HepG2 (cell line): ENCODE measurements at regions of chr14 and their contacts with region 1.

Region 1: GRCh38 chr14:32469388-32470160 is 140.5 kb downstream of the AKAP6 start:
- DNase-seq: peak; percentile 63
- ATAC-seq: peak; percentile 60
- H3K4me3 ChIP-seq: no peak overlapping the region
- H3K27ac ChIP-seq: no peak overlapping the region
- H3K4me1 ChIP-seq: peaks cover 16% of the 10 kb centered on the region
- H3K27me3 ChIP-seq: no peaks in the 10 kb centered on the region
- CTCF ChIP-seq: peak; percentile 67
- EP300 ChIP-seq: no peak
- POLR2A ChIP-seq: no peak
- RAD21 ChIP-seq: no peak

Region 2: DNA sequence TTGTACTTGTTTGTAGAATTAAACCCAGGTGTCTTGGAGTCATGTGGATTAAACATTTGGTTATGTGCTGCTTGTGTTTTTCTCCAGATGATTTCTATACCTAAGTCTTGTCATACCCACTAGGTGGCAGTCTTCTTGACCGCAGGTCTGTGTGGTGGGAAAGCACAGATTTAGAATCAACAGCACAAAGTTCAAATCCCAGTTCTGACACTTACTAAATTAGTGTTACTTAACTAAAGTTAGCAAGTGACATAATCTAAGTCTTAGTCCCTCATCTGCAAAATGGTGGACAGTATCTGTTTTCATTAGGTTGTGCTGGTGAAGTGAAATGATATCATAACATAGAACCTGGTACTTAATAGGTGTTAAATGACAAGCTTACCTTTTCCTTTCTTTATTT is 543.5 kb before region 1 on chr14:
- CTCF ChIA-PET with region 1: interaction called, 11 read pairs
- POLR2A ChIA-PET with region 1: no interaction called
- in situ Hi-C with region 1: loop called (anchors 10 kb)
- intact Hi-C with region 1: loop called (anchors 1 kb)
- DNase-seq: peak; percentile 87
- ATAC-seq: peak; percentile 80
- H3K4me3 ChIP-seq: no peak overlapping the region
- H3K27ac ChIP-seq: no peak overlapping the region
- H3K4me1 ChIP-seq: peaks cover 14% of the 10 kb centered on the region; the same call in 1 of the 2 replicates
- H3K27me3 ChIP-seq: no peaks in the 10 kb centered on the region; a peak in 1 of 5 replicates
- CTCF ChIP-seq: peak; percentile 86
- EP300 ChIP-seq: no peak
- POLR2A ChIP-seq: no peak
- RAD21 ChIP-seq: peak; percentile 85

Region 3: DNA sequence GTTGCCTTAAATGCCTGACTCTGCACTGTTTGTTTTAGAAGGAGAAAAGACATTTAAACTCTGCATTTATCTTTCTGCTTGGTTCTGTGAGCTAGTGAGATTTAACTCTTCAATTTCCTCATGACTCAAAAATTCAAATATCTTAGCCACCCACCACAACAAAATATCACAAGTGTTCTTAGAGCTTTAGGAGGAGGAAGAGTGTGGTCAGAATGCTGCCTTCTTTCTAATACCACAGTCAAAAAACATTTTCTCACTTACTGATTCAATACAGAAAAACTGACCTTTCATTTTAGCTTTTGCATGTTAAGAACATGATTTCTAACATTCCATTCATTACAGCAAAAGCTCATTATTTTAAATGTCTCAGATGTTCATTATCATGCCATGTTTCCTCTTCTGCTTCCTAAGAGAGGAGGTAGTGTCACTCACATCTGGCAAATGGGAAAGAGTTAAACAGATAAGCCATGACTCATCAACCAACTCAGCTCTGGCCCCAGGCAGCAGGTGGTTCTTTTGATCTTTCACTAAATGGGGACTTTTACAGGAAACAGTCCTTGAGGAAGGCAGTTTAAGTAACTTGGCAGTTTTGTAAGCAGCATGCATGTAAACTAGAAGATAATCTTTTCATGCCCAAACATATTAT is 210.1 kb before region 1 on chr14:
- CTCF ChIA-PET with region 1: interaction called, 3 read pairs
- POLR2A ChIA-PET with region 1: no interaction called
- in situ Hi-C with region 1: no loop called
- intact Hi-C with region 1: loop called (anchors 1 kb)
- DNase-seq: peak; percentile 77
- ATAC-seq: peak; percentile 28; the same call in 2 of the 3 replicates
- H3K4me3 ChIP-seq: no peak overlapping the region
- H3K27ac ChIP-seq: no peak overlapping the region
- H3K4me1 ChIP-seq: peaks cover 19% of the 10 kb centered on the region
- H3K27me3 ChIP-seq: no peaks in the 10 kb centered on the region
- CTCF ChIP-seq: no peak
- EP300 ChIP-seq: peak in 1 of 2 experiments; percentile 81; a peak in 2 of 4 replicates
- POLR2A ChIP-seq: no peak
- RAD21 ChIP-seq: no peak

Region 4: DNA sequence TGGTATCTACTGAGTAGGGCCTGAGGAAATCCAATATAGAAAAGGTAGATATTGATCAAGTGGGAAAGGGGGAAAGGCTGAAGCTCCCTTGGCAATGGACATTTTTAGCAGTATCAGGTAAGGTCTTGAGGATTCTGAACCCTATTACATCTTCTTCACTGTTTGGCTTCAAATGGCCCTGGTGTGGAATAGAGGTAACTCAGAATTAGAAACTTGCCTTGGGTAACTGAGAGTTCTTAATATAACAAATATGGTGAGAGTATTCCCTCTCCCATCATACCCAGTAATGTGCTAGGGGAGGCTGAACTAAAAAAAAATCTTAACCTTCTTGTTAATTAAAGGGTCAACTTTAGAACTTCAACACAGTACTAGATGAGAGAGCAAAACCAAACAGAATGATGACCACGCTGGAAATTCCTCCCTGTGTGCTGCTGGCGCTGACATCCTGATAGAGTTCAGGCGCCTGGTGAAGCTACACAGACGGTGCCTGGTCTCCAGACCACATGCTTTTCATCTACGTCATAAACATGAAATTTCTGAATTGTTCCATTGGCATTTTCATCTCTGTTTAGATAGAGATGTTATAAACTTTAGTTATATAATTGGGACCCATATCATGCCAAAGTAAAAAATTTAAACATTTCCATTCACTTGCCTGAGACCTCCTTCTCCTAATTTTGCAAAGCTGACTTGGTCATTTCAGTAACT is 12.2 kb before region 1 on chr14:
- CTCF ChIA-PET with region 1: no interaction called
- POLR2A ChIA-PET with region 1: no interaction called
- in situ Hi-C with region 1: no loop called
- intact Hi-C with region 1: no loop called
- DNase-seq: no peak
- ATAC-seq: no peak
- H3K4me3 ChIP-seq: no peak overlapping the region
- H3K27ac ChIP-seq: no peak overlapping the region
- H3K4me1 ChIP-seq: no peaks in the 10 kb centered on the region
- H3K27me3 ChIP-seq: no peaks in the 10 kb centered on the region
- CTCF ChIP-seq: no peak
- EP300 ChIP-seq: no peak
- POLR2A ChIP-seq: no peak
- RAD21 ChIP-seq: no peak

Region 5: DNA sequence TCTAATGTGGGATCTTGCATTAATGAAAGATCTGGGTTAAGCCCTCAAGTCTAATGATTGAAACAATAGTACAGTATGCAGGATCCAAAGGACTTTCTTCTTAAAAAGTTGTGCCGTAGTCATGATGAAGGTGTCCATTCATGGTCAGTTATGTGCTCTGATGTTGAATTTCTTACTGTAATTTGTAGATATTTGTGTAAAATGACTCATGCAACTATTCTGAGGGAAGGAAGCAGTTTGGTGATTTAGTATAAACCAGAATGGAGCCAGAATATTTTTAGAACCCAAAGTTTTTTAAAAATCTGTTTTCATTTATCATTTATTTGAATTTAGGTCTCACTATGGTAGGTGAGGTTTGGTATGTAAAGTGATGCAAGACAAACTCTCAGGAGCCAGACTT is 10.8 kb after region 1 on chr14:
- CTCF ChIA-PET with region 1: no interaction called
- POLR2A ChIA-PET with region 1: no interaction called
- in situ Hi-C with region 1: no loop called
- intact Hi-C with region 1: no loop called
- DNase-seq: no peak
- ATAC-seq: no peak
- H3K4me3 ChIP-seq: no peak overlapping the region
- H3K27ac ChIP-seq: no peak overlapping the region
- H3K4me1 ChIP-seq: no peaks in the 10 kb centered on the region
- H3K27me3 ChIP-seq: peaks cover 0 to 1% of the 10 kb centered on the region in 2 experiments; a peak in 1 of 5 replicates
- CTCF ChIP-seq: no peak
- EP300 ChIP-seq: no peak
- POLR2A ChIP-seq: no peak
- RAD21 ChIP-seq: no peak

Region 6: DNA sequence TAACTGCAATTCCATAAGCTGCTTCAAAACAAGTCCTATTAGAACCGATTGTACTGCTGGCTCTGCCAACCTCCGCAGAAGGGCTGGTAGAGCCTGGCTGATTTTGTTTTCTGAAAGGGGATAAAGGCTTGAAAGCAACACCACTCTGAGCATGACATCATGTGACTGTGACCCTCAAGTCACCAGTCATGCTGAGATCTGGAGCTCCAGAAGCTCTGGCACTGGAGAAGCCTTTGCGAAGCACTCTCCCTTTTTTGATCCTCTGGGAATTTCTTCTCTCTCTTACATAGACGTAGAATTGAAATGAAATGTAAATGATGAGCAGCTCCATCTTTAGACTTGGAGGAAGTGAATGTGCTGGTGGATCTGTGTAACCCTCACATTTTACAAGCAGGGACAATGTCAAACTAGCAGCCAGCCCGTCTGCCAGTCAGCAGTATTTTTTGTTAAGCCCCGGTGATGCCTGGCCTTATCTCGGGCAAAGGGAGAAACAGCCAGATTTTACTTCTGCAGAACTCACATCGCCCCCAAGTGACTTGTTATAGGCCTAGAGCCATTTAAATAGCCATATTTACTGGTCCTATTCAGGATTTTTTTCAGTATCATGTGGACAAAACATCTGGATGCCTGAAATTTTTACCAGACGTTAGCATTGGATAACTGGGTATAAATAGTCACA is 357.0 kb after region 1 on chr14:
- CTCF ChIA-PET with region 1: no interaction called
- POLR2A ChIA-PET with region 1: no interaction called
- in situ Hi-C with region 1: no loop called
- intact Hi-C with region 1: no loop called
- DNase-seq: no peak
- ATAC-seq: no peak
- H3K4me3 ChIP-seq: no peak overlapping the region
- H3K27ac ChIP-seq: no peak overlapping the region
- H3K4me1 ChIP-seq: no peaks in the 10 kb centered on the region
- H3K27me3 ChIP-seq: no peaks in the 10 kb centered on the region
- CTCF ChIP-seq: no peak
- EP300 ChIP-seq: no peak
- POLR2A ChIP-seq: no peak
- RAD21 ChIP-seq: no peak